Activated CD4-positive, alpha-beta T cell treated with anti-CD3 and anti-CD28 coated beads, Interleukin-2, amount 10 ng/mL, durations not matched to agents 24 days and 14 days (primary cell): ENCODE measurements at regions of chr14 and their contacts with region 1.

Region 1: GRCh38 chr14:50321009-50321660 is 9.0 kb downstream of the DMAC2L start:
- DNase-seq: peak; percentile 91
- H3K4me3 Mint-ChIP-seq: no peak overlapping the region
- H3K27ac Mint-ChIP-seq: no peak overlapping the region
- H3K4me1 Mint-ChIP-seq: peaks cover 22% of the 10 kb centered on the region
- H3K27me3 Mint-ChIP-seq: no peaks in the 10 kb centered on the region

Region 2: GRCh38 chr14:50342221-50343078 is 21.3 kb after region 1 on chr14:
- intact Hi-C with region 1: loop called (anchors 1 kb)
- DNase-seq: peak; percentile 77
- H3K4me3 Mint-ChIP-seq: no peak overlapping the region
- H3K27ac Mint-ChIP-seq: peak overlapping the region; percentile 23
- H3K4me1 Mint-ChIP-seq: peaks cover 24% of the 10 kb centered on the region
- H3K27me3 Mint-ChIP-seq: peaks cover 14% of the 10 kb centered on the region

Region 3: DNA sequence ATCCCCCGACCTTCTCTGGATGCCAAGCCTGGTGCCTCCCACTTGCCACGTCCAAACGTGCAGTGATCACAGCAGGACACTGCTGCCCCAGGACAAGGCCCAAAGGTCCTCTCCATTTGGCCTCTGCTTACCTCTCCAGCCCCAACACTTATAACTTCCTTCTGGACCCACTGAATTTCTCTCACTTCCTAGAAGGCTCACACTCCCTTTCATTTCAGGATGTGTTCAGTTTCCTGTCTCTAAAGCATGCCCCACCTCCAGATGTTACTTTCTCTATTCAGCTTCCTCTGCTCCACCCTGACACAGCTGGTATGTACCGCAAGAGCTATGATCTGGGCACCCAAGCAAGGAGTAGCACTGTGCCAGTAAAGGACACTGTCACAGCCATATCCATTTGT is 42.6 kb after region 1 on chr14:
- intact Hi-C with region 1: loop called (anchors 1 kb)
- DNase-seq: peak; percentile 89
- H3K4me3 Mint-ChIP-seq: peak overlapping the region; percentile 86
- H3K27ac Mint-ChIP-seq: peak overlapping the region; percentile 93
- H3K4me1 Mint-ChIP-seq: peaks cover 22% of the 10 kb centered on the region
- H3K27me3 Mint-ChIP-seq: no peaks in the 10 kb centered on the region

Region 4: DNA sequence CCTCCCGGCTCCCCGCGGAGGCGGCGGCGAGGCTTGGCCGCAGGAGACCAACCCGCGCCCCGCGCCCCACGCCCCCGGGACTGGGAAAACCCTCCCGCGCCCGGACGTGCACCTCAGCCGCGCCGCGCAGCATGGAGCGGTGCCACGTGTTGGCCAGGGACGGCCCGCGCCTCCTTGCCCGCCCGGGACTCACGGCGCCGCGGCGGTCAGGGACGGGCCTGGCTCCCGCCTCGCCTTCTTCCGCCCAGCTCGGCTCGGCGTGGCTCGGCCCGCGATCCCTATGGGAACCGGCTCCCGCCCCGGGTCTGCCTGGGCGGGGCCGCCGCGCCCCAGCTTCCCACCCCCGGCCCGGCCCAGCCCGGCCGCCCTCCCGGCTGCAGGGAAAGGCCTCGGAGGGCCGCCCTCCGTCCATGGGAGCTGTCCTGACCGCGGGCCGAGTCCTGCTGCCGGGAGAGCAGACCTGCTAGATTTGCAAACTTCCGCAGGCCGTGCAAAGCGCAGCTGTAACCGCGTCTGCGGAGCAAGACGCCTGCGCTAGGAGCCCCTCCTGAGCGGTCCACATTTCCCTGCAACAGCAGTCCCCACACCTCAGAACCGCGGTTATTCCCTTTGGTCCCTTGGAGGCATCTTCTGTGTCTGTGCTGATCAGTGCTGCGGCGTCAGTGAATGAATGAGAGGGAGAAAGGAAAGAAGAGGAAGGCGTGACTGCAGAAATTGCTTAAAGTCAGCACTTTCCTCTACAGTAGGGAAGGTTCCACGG is 75.7 kb after region 1 on chr14 and contains the start of gene CDKL1:
- intact Hi-C with region 1: loop called (anchors 1 kb)
- DNase-seq: peak; percentile 84
- H3K4me3 Mint-ChIP-seq: peak within 1 kb of the TSS; percentile 88
- H3K27ac Mint-ChIP-seq: peak within 1 kb of the TSS; percentile 88
- H3K4me1 Mint-ChIP-seq: peaks cover 16% of the 10 kb centered on the region
- H3K27me3 Mint-ChIP-seq: peaks cover 20% of the 10 kb centered on the region
- total RNA-seq, gene CDKL1: 4.8 and 5.7 TPM in 2 replicates

Region 5: GRCh38 chr14:50532502-50533240 is 211.5 kb after region 1 on chr14 and contains the start of gene MAP4K5:
- intact Hi-C with region 1: loop called (anchors 1 kb)
- DNase-seq: peak; percentile 96
- H3K4me3 Mint-ChIP-seq: peak within 1 kb of the TSS; percentile 89
- H3K27ac Mint-ChIP-seq: peak within 1 kb of the TSS; percentile 75
- H3K4me1 Mint-ChIP-seq: peaks cover 38% of the 10 kb centered on the region
- H3K27me3 Mint-ChIP-seq: peaks cover 17% of the 10 kb centered on the region
- total RNA-seq, gene MAP4K5: 24.3 and 24.6 TPM in 2 replicates

Region 6: GRCh38 chr14:50762001-50762930 is 441.1 kb after region 1 on chr14:
- intact Hi-C with region 1: loop called (anchors 5 kb)
- DNase-seq: no peak
- H3K4me3 Mint-ChIP-seq: no peak overlapping the region
- H3K27ac Mint-ChIP-seq: peak overlapping the region; percentile 72
- H3K4me1 Mint-ChIP-seq: peaks cover 23% of the 10 kb centered on the region
- H3K27me3 Mint-ChIP-seq: no peaks in the 10 kb centered on the region